Transverse colon (tissue), 4 donors: ENCODE measurements at regions of chr4 and their contacts with region 1.

Region 1: GRCh38 chr4:48290146-48290772 is 20.6 kb upstream of the TEC start:
- DNase-seq: peak; percentile 27
- H3K4me3 ChIP-seq: no peak overlapping the region
- H3K27ac ChIP-seq: no peak overlapping the region
- H3K4me1 ChIP-seq: no peaks in the 10 kb centered on the region
- H3K27me3 ChIP-seq: no peaks in the 10 kb centered on the region
- CTCF ChIP-seq: peak; percentile 52 to 68 (median 60)
- EP300 ChIP-seq: no peak
- POLR2A ChIP-seq: no peak

Region 2: DNA sequence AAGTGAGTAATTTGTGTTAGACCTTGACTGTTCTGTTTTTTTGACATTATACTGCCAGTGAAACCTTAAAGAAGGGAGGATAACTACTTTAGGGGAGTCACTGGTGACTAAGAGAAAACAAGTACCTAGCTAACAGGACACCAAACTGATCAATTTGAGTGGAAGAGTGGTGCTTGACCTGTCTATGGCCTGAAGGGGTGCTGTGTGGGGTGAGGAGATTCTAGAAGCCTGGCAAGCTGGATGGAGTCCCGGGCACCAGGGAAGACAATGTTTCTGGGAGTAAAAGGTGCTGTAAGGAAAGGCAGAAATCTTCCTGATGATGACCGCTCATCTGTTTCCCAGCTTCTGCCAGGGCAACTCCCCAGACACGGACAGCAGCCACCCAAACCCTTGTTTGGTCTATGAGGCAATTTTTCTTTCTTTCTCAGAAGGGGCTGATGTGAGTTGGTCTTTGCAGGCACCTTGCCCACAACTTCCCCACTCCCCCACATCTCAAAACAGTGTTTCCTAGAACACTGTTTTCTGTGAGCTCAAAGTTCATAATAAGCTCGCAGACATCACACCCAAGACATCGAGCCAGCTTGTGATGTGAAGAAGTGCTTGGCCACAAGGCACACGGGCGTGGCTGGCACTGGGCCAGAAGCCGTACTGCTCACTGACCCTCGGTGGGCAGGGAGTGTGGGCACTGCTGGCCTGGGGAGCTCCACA is 160.8 kb before region 1 on chr4:
- in situ Hi-C with region 1: loop called in 1 of 4 experiments (anchors 10 kb)
- intact Hi-C with region 1: no loop called
- DNase-seq: peak; percentile 52
- H3K4me3 ChIP-seq: no peak overlapping the region
- H3K27ac ChIP-seq: peak overlapping the region in 2 of 4 donors; percentile 15 to 18
- H3K4me1 ChIP-seq: peaks cover 0 to 26% (median 15%) of the 10 kb centered on the region in 4 donors
- H3K27me3 ChIP-seq: no peaks in the 10 kb centered on the region
- CTCF ChIP-seq: no peak
- EP300 ChIP-seq: no peak
- POLR2A ChIP-seq: no peak